K562 (cell line): ENCODE measurements at regions of chr3 and their contacts with region 1.

Region 1: GRCh38 chr3:193665370-193665989 is 72.5 kb downstream of the OPA1 start:
- DNase-seq: peak in 1 of 4 experiments; percentile 34
- ATAC-seq: no peak
- H3K4me3 ChIP-seq: no peak overlapping the region
- H3K27ac ChIP-seq: no peak overlapping the region
- H3K4me1 ChIP-seq: peaks cover 0 to 30% of the 10 kb centered on the region in 2 experiments; a peak in 3 of 5 replicates
- H3K27me3 ChIP-seq: no peaks in the 10 kb centered on the region
- CTCF ChIP-seq: peak in 1 of 3 experiments; percentile 55; a peak in 2 of 6 replicates
- EP300 ChIP-seq: no peak
- POLR2A ChIP-seq: no peak
- RAD21 ChIP-seq: peak; percentile 44 to 53

Region 2: GRCh38 chr3:193574448-193575070 is 90.9 kb before region 1 on chr3:
- CTCF ChIA-PET with region 1: no interaction called
- POLR2A ChIA-PET with region 1: no interaction called
- in situ Hi-C with region 1: no loop called
- intact Hi-C with region 1: no loop called
- DNase-seq: no peak
- ATAC-seq: no peak
- H3K4me3 ChIP-seq: no peak overlapping the region
- H3K27ac ChIP-seq: no peak overlapping the region
- H3K4me1 ChIP-seq: no peaks in the 10 kb centered on the region
- H3K27me3 ChIP-seq: peaks cover 0 to 4% of the 10 kb centered on the region in 2 experiments; a peak in 2 of 5 replicates
- CTCF ChIP-seq: no peak
- EP300 ChIP-seq: no peak
- POLR2A ChIP-seq: no peak
- RAD21 ChIP-seq: no peak

Region 3: DNA sequence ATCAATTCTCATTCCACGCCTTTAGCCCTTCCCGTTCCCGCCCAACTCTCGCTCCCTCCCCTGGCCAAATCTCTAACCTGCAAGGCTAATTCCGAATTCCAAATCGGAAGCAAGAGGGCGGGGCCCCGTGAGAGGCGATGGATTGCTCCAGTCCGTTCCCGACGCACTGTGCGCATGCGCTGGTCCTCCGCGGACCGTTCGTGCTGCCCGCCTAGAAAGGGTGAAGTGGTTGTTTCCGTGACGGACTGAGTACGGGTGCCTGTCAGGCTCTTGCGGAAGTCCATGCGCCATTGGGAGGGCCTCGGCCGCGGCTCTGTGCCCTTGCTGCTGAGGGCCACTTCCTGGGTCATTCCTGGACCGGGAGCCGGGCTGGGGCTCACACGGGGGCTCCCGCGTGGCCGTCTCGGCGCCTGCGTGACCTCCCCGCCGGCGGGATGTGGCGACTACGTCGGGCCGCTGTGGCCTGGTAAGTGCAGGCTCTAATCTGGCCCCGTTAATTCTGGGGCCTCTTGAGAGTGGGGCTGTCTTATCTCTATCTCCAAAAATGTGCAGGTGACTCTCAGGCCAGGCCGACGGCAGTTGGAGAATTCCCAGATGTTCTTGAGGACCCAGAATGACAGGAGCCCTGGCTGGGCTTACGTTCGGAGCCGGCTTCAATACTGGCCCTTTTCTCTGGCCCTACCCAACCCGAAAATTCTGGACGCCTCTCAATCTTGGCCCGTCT is 72.4 kb before region 1 on chr3 and contains the start of gene OPA1:
- CTCF ChIA-PET with region 1: no interaction called
- POLR2A ChIA-PET with region 1: interaction called, 3 read pairs
- in situ Hi-C with region 1: no loop called
- intact Hi-C with region 1: loop called (anchors 1 kb)
- DNase-seq: peak; percentile 95 to 99 (median 96)
- ATAC-seq: peak; percentile 96
- H3K4me3 ChIP-seq: peak within 1 kb of the TSS; percentile 80
- H3K27ac ChIP-seq: peak within 1 kb of the TSS; percentile 84
- H3K4me1 ChIP-seq: peaks cover 5 to 22% of the 10 kb centered on the region in 2 experiments; a peak in 4 of 5 replicates
- H3K27me3 ChIP-seq: no peaks in the 10 kb centered on the region
- CTCF ChIP-seq: peak; percentile 0 to 39 (median 39); a peak in 3 of 6 replicates
- EP300 ChIP-seq: peak; percentile 58
- POLR2A ChIP-seq: peak; percentile 90
- RAD21 ChIP-seq: no peak
- polyA plus RNA-seq, gene OPA1: 19.7 to 30.8 TPM

Region 4: DNA sequence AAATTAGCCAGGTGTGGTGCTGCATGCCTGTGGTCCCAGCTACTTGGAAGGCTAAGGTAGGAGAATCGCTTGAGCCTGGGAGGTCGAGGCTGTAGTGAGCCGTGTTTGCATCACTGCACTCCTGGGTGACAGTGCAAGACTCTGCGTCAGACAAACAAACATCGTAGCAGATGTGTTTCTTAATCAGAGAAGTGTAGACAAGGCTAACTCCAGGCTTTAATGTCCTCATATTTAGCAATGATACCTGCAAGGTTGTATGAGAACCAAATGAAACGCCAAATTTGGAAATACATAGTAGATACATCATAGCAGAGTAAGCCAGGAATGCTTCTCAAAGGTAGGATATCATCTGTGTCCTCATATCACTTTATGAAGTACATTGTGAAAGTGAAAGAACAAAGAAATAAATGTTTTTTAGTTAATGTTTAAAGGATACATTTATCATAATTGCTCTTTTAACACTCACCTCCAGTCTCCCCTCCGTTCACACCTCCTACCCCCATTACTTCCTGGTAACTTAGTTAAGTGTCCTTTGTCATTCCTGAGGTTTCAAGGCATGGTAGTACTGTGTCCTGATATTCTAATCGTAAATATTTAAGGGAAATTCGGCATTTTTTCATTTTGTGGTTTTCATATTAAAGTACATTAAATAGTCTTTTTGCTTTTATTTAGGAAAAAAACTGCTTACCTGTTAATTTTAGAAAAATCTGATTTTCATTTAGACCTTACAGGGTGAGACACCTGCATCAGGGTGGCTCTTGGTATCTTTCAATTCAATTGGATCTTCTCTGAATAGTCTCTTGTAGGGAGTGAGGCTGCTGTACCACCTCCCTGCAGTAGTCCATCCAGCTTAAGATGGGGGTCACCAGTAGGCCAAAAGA is 23.6 kb after region 1 on chr3:
- CTCF ChIA-PET with region 1: no interaction called
- POLR2A ChIA-PET with region 1: interaction called, 9 read pairs
- in situ Hi-C with region 1: no loop called
- intact Hi-C with region 1: loop called (anchors 1 kb)
- DNase-seq: peak in 1 of 4 experiments; percentile 29
- ATAC-seq: peak; percentile 69
- H3K4me3 ChIP-seq: no peak overlapping the region
- H3K27ac ChIP-seq: peak overlapping the region; percentile 76
- H3K4me1 ChIP-seq: peaks cover 6 to 31% of the 10 kb centered on the region in 2 experiments
- H3K27me3 ChIP-seq: no peaks in the 10 kb centered on the region
- CTCF ChIP-seq: no peak
- EP300 ChIP-seq: no peak
- POLR2A ChIP-seq: no peak
- RAD21 ChIP-seq: no peak

Region 5: DNA sequence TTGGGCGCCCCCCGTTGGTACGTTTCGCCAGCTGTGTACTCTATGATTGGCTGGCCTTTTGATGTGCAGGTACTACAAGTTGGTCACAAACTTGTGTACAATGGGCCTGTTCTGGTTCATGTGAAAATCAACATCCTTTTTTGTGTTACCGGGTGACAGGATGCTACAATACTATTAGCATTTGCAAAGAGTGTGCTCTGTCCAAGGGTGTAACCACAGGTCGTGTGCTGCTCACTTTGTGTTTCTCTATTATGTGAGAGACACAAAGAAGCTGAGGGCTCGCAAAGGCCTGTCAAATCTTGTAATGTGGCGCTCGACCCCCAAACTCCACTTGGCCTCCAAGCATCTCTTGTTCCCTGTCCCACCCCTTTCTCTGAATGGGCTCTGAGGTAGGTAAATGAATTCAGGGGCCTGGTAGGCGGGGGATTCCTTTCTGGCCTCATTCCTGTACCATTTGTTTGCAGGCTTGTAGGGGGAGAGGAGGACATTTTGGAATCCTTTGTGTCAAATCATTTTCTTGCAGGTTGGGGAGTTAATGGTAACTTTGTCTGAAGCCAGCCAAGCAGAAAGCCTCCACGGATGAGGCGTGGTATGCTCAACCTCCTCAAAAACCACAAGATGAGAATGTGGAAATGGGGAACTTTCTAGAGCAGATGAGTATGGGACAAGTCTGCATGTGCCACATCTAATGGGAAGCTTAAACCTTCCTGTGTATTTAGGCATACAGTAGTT is 36.6 kb after region 1 on chr3:
- CTCF ChIA-PET with region 1: interaction called, 3 read pairs
- POLR2A ChIA-PET with region 1: no interaction called
- in situ Hi-C with region 1: no loop called
- intact Hi-C with region 1: loop called (anchors 1 kb)
- DNase-seq: no peak
- ATAC-seq: peak; percentile 24; the same call in 1 of the 3 replicates
- H3K4me3 ChIP-seq: no peak overlapping the region
- H3K27ac ChIP-seq: no peak overlapping the region
- H3K4me1 ChIP-seq: no peaks in the 10 kb centered on the region
- H3K27me3 ChIP-seq: no peaks in the 10 kb centered on the region
- CTCF ChIP-seq: no peak
- EP300 ChIP-seq: no peak
- POLR2A ChIP-seq: 0 out of 2 replicates have a peak, but pooled peaks have one; percentile 14
- RAD21 ChIP-seq: no peak

Region 6: GRCh38 chr3:193743702-193744047 is 78.2 kb after region 1 on chr3:
- CTCF ChIA-PET with region 1: no interaction called
- POLR2A ChIA-PET with region 1: no interaction called
- in situ Hi-C with region 1: no loop called
- intact Hi-C with region 1: loop called (anchors 10 kb)
- DNase-seq: no peak
- ATAC-seq: peak; percentile 7; the same call in 1 of the 3 replicates
- H3K4me3 ChIP-seq: no peak overlapping the region
- H3K27ac ChIP-seq: no peak overlapping the region
- H3K4me1 ChIP-seq: peaks cover 6 to 18% of the 10 kb centered on the region in 2 experiments; a peak in 4 of 5 replicates
- H3K27me3 ChIP-seq: no peaks in the 10 kb centered on the region
- CTCF ChIP-seq: no peak
- EP300 ChIP-seq: no peak
- POLR2A ChIP-seq: no peak
- RAD21 ChIP-seq: no peak

Region 7: DNA sequence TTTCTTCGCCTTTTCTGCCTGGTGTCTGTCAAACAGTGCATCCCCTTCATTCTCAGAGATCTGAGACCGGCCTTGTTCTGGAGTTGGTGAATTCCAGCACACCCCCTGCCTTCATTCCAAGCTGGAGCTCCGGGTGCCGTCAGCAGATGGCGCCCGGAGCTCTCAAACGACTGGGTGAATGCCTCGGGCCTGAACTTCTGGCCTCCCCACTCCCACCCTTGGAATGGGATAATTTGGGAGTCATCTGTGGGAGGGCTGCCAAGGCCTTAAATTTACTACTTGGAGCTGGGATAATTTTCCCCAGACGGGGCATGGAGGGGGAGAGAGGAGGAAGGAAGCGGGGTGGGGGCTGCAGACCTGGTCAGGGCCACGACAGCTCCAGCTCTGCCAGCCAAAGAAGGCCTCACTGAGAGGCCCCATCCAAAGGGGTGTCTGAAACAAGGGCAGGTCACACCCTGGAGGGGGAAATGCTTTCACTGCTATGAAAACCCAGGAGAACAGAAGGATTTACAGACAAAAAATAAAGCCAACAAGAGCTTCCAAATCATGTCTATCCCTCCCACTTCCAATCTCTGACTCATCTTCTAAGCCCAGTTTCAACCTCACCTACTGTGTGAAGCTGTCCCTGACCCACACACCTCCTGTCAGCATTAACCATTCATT is 115.5 kb after region 1 on chr3:
- CTCF ChIA-PET with region 1: no interaction called
- POLR2A ChIA-PET with region 1: no interaction called
- in situ Hi-C with region 1: no loop called
- intact Hi-C with region 1: loop called (anchors 2 kb)
- DNase-seq: peak; percentile 77 to 85 (median 78)
- ATAC-seq: peak; percentile 93
- H3K4me3 ChIP-seq: no peak overlapping the region
- H3K27ac ChIP-seq: no peak overlapping the region
- H3K4me1 ChIP-seq: peaks cover 10 to 22% of the 10 kb centered on the region in 2 experiments; a peak in 4 of 5 replicates
- H3K27me3 ChIP-seq: no peaks in the 10 kb centered on the region
- CTCF ChIP-seq: peak; percentile 86
- EP300 ChIP-seq: no peak
- POLR2A ChIP-seq: no peak
- RAD21 ChIP-seq: peak; percentile 93 to 96

Region 8: DNA sequence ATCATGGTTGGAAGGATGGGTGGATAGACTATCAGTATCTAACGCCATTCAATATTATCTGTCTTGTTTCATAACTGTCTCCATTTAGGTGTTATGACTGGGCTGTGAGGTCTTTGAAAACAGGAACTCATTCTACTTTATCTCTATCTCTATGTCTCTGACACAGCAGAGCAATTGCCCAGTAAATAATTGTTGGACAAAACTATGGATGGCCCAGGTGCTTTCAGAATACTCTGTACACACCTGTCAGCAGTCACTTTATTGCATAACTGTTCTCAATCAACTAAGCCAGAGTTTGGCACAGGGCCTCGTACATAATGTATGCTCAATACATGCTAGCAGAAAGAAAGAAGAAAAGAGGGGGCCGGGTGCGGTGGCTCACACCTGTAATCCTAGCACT is 137.8 kb after region 1 on chr3:
- CTCF ChIA-PET with region 1: no interaction called
- POLR2A ChIA-PET with region 1: no interaction called
- in situ Hi-C with region 1: no loop called
- intact Hi-C with region 1: no loop called
- DNase-seq: no peak
- ATAC-seq: no peak
- H3K4me3 ChIP-seq: no peak overlapping the region
- H3K27ac ChIP-seq: no peak overlapping the region
- H3K4me1 ChIP-seq: peaks cover 6 to 20% of the 10 kb centered on the region in 2 experiments; a peak in 3 of 5 replicates
- H3K27me3 ChIP-seq: no peaks in the 10 kb centered on the region
- CTCF ChIP-seq: no peak
- EP300 ChIP-seq: no peak
- POLR2A ChIP-seq: no peak
- RAD21 ChIP-seq: no peak

Region 9: DNA sequence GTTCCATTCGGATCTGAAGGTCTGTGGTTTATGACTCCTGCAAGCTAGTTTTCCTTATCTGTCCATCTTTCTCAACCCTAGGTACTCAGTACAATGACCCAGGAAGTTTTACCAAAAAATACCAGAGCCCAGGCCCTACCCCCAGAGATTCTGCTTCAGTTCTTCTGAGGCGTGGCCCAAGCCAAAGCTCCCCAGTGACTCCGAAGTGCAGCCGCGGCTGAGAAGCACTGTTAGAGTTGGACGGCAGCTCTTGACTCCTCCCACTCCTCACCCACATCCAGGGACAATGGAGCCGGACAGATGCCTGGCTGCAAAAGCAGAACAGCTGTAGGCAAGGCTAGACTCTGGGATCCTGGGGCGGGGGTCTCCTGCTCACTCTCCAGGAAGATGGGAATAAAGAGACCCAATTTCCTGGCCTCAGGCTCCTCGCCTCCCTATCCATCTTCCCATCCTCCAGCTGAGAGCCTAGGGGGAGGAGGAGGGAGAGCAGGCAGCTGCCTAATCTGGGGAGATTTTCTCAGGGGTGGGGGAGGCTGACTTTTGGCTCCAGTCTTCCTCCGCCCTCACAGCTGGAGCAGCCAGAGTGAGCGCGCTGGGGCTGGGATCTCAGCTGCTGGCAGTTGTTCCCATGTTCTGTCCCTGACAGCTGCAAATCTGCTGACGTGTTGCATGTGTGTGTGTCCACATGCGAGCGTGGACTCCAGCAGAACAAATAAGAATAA is 151.3 kb after region 1 on chr3:
- CTCF ChIA-PET with region 1: no interaction called
- POLR2A ChIA-PET with region 1: no interaction called
- in situ Hi-C with region 1: no loop called
- intact Hi-C with region 1: no loop called
- DNase-seq: peak; percentile 52 to 78 (median 66)
- ATAC-seq: peak; percentile 92
- H3K4me3 ChIP-seq: no peak overlapping the region
- H3K27ac ChIP-seq: no peak overlapping the region
- H3K4me1 ChIP-seq: peaks cover 9 to 10% of the 10 kb centered on the region in 2 experiments; a peak in 4 of 5 replicates
- H3K27me3 ChIP-seq: no peaks in the 10 kb centered on the region
- CTCF ChIP-seq: no peak
- EP300 ChIP-seq: no peak
- POLR2A ChIP-seq: no peak
- RAD21 ChIP-seq: no peak